Ovary (tissue), 10 donors: ENCODE measurements at regions of chr19 and their contacts with region 1.

Region 1: DNA sequence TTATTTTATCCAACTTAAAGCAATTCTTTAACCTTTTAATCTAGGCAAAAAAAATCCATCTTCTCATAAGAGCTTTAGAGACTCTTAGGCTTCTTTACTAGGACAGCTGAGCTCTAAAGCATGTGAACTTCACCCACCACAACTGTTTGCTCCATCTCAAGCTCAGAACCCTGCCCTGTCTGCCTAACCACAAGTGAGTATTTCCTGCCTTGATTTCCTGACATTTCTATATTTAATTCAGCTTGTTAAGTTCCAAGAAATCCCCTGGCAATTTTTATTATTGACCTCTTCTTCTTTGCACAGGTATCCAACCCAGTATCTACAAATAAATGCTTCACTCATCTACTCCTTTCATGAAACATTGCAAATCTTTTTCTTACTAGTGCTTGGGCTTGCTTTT is 21.1 kb upstream of the CEACAM21 start:
- DNase-seq: no peak
- H3K4me3 ChIP-seq: no peak overlapping the region
- H3K27ac ChIP-seq: no peak overlapping the region
- H3K4me1 ChIP-seq: no peaks in the 10 kb centered on the region
- H3K27me3 ChIP-seq: no peaks in the 10 kb centered on the region
- CTCF ChIP-seq: no peak
- EP300 ChIP-seq: no peak
- POLR2A ChIP-seq: no peak

Region 2: GRCh38 chr19:41457241-41457640 is 97.7 kb before region 1 on chr19:
- intact Hi-C with region 1: loop called in 1 of 4 experiments (anchors 10 kb)
- DNase-seq: no peak
- H3K4me3 ChIP-seq: no peak overlapping the region
- H3K27ac ChIP-seq: no peak overlapping the region
- H3K4me1 ChIP-seq: peaks cover 4% of the 10 kb centered on the region
- H3K27me3 ChIP-seq: no peaks in the 10 kb centered on the region
- CTCF ChIP-seq: no peak
- EP300 ChIP-seq: no peak
- POLR2A ChIP-seq: no peak